K562 (cell line): ENCODE measurements at regions of chr9 and their contacts with region 1.

Region 1: GRCh38 chr9:121286973-121287741 is 19.2 kb downstream of the GSN start:
- DNase-seq: peak; percentile 90 to 96 (median 93)
- ATAC-seq: peak; percentile 85
- H3K4me3 ChIP-seq: peak overlapping the region; percentile 14; the same call in 1 of the 2 replicates
- H3K27ac ChIP-seq: peak overlapping the region; percentile 93
- H3K4me1 ChIP-seq: peaks cover 60 to 72% of the 10 kb centered on the region in 2 experiments
- H3K27me3 ChIP-seq: no peaks in the 10 kb centered on the region
- CTCF ChIP-seq: peak; percentile 51 to 60 (median 52)
- EP300 ChIP-seq: peak; percentile 86
- POLR2A ChIP-seq: peak; percentile 54; the same call in 1 of the 2 replicates
- RAD21 ChIP-seq: 0 out of 4 replicates have a peak, but pooled peaks of 1 of the 2 experiments have one; percentile 5

Region 2: DNA sequence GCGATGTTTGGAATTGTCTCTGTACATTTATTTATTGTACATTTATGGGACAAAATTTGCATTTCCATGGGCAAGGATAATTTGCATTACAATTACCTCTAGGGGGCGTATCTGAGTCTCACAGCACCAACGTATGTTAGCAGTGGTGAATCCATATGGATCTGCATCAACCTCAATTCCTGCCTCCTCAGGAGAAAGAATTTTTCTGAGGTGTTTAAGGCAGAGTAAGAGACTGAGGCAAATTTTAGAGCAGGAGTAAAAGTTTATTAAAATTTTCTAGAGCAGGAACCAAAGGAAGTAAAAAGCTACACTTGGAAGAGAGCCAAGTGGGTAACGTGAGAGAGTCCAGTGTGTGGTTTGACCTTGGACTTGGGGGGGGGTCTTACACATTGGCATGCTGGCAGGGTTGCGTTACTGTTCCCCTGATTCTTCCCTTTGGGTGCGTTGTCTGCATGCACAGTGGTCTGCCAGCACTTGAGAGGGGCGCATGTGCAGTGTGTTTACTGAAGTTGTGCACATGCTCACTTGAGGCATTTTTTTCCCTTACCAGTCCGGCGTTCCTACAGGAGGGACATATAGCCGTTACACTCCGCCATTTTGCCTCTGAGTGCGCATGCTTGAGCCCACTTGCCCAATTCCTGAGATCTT is 64.5 kb before region 1 on chr9:
- CTCF ChIA-PET with region 1: no interaction called
- POLR2A ChIA-PET with region 1: interaction called, 3 read pairs
- in situ Hi-C with region 1: no loop called
- intact Hi-C with region 1: loop called (anchors 1 kb)
- DNase-seq: peak; percentile 30 to 69 (median 36)
- ATAC-seq: peak; percentile 73
- H3K4me3 ChIP-seq: no peak overlapping the region
- H3K27ac ChIP-seq: no peak overlapping the region
- H3K4me1 ChIP-seq: peaks cover 0 to 26% of the 10 kb centered on the region in 2 experiments; a peak in 3 of 5 replicates
- H3K27me3 ChIP-seq: no peaks in the 10 kb centered on the region
- CTCF ChIP-seq: peak; percentile 68 to 80 (median 79)
- EP300 ChIP-seq: no peak
- POLR2A ChIP-seq: no peak
- RAD21 ChIP-seq: peak; percentile 50 to 67

Region 3: GRCh38 chr9:121267689-121268597 is 19.2 kb before region 1 on chr9 and contains the start of gene GSN:
- CTCF ChIA-PET with region 1: no interaction called
- POLR2A ChIA-PET with region 1: interaction called, 11 read pairs
- in situ Hi-C with region 1: no loop called
- intact Hi-C with region 1: no loop called
- DNase-seq: peak; percentile 81 to 97 (median 92)
- ATAC-seq: peak; percentile 97
- H3K4me3 ChIP-seq: peak within 1 kb of the TSS; percentile 62
- H3K27ac ChIP-seq: no peak within 1 kb of the TSS; the same call in 2 of the 3 replicates
- H3K4me1 ChIP-seq: peaks cover 14 to 31% of the 10 kb centered on the region in 2 experiments
- H3K27me3 ChIP-seq: no peaks in the 10 kb centered on the region
- CTCF ChIP-seq: 0 out of 6 replicates have a peak, but pooled peaks of 1 of the 3 experiments have one; percentile 2
- EP300 ChIP-seq: no peak
- POLR2A ChIP-seq: peak; percentile 49; the same call in 1 of the 2 replicates
- RAD21 ChIP-seq: no peak
- polyA plus RNA-seq, gene GSN: 0.39 to 0.41 TPM

Region 4: DNA sequence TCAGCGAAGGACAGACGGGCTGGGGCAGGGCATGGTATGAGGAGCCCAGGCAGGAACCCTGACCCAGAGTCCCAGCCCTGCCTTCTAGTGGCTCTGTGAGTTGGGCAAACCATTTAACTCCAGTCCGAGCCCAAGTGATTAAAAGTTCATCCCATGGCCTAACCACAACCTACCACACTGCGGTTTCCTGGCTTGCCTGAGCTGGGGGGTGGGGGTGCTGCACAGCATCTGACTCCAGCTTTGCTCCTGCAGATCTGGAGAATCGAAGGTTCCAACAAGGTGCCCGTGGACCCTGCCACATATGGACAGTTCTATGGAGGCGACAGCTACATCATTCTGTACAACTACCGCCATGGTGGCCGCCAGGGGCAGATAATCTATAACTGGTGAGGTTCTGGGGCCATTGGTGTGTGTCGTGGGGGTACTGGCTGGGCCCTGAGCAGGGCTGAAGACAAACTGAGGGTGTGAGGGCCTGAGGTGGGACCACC is 33.9 kb after region 1 on chr9:
- CTCF ChIA-PET with region 1: no interaction called
- POLR2A ChIA-PET with region 1: interaction called, 3 read pairs
- in situ Hi-C with region 1: no loop called
- intact Hi-C with region 1: loop called (anchors 2 kb)
- DNase-seq: no peak
- ATAC-seq: no peak
- H3K4me3 ChIP-seq: no peak overlapping the region
- H3K27ac ChIP-seq: no peak overlapping the region
- H3K4me1 ChIP-seq: peaks cover 0 to 7% of the 10 kb centered on the region in 2 experiments; a peak in 2 of 5 replicates
- H3K27me3 ChIP-seq: no peaks in the 10 kb centered on the region
- CTCF ChIP-seq: no peak
- EP300 ChIP-seq: no peak
- POLR2A ChIP-seq: no peak
- RAD21 ChIP-seq: no peak

Region 5: DNA sequence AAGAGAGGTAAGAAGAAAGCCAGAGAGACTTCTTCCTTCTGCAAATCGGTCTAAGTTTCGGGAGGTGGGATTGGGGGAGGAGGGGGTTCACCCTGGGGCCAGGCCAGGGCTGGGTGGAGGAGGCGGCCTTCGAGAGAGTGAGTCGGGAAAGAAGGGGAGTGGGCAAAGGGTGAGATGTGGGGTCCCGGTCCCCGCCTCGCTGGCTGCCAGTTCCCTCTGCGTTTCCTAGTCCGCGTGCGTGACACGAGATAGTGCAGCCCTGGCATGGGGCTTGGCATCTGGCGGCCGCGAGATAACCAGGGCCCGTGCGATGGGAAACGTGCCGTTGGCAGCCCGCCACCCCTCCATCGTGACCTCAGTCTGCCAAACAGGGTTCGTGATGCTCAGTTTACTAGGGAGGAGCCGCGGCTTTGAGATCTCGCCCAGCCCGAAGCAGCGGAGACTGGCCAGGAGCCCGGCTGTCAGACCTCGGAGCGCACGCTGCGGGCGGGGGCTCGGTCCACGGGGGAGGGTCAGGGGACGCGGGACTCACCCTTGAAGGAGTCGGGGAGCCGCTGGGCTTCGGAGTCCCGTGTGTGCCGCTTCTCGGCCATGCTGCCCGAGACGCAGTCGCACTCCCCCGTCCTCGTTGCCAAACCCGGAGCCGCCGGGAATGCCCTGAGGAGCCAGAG is 82.6 kb after region 1 on chr9 and contains the start of gene STOM:
- CTCF ChIA-PET with region 1: no interaction called
- POLR2A ChIA-PET with region 1: no interaction called
- in situ Hi-C with region 1: no loop called
- intact Hi-C with region 1: loop called (anchors 1 kb)
- DNase-seq: peak in 1 of 4 experiments; percentile 10
- ATAC-seq: peak; percentile 73
- H3K4me3 ChIP-seq: peak within 1 kb of the TSS; percentile 77
- H3K27ac ChIP-seq: peak within 1 kb of the TSS; percentile 99
- H3K4me1 ChIP-seq: peaks cover 18 to 33% of the 10 kb centered on the region in 2 experiments
- H3K27me3 ChIP-seq: no peaks in the 10 kb centered on the region
- CTCF ChIP-seq: no peak
- EP300 ChIP-seq: no peak
- POLR2A ChIP-seq: peak; percentile 86; the same call in 1 of the 2 replicates
- RAD21 ChIP-seq: no peak
- polyA plus RNA-seq, gene STOM: 24.6 to 35.8 TPM